A549 (cell line): ENCODE measurements at regions of chr18 and their contacts with region 1.

Region 1: GRCh38 chr18:59402432-59403090 is 43.5 kb upstream of the LMAN1 start:
- DNase-seq: peak; percentile 76 to 87
- ATAC-seq: peak; percentile 100
- H3K4me3 ChIP-seq: no peak overlapping the region
- H3K27ac ChIP-seq: no peak overlapping the region
- H3K4me1 ChIP-seq: no peaks in the 10 kb centered on the region
- CTCF ChIP-seq: peak; percentile 85
- EP300 ChIP-seq: no peak
- POLR2A ChIP-seq: no peak
- RAD21 ChIP-seq: peak; percentile 90 to 95

Region 2: GRCh38 chr18:59249205-59249774 is 153.3 kb before region 1 on chr18:
- CTCF ChIA-PET with region 1: interaction called, 87 read pairs
- POLR2A ChIA-PET with region 1: interaction called, 6 read pairs
- DNase-seq: peak; percentile 38 to 69
- ATAC-seq: peak; percentile 70 to 92
- H3K4me3 ChIP-seq: no peak overlapping the region
- H3K27ac ChIP-seq: no peak overlapping the region
- H3K4me1 ChIP-seq: no peaks in the 10 kb centered on the region
- CTCF ChIP-seq: peak; percentile 54
- EP300 ChIP-seq: no peak
- POLR2A ChIP-seq: no peak
- RAD21 ChIP-seq: peak; percentile 68 to 69

Region 3: GRCh38 chr18:59303006-59303405 is 99.6 kb before region 1 on chr18:
- CTCF ChIA-PET with region 1: interaction called, 108 read pairs
- POLR2A ChIA-PET with region 1: no interaction called
- DNase-seq: no peak
- ATAC-seq: no peak
- H3K4me3 ChIP-seq: no peak overlapping the region
- H3K27ac ChIP-seq: no peak overlapping the region
- H3K4me1 ChIP-seq: no peaks in the 10 kb centered on the region
- CTCF ChIP-seq: no peak
- EP300 ChIP-seq: no peak
- POLR2A ChIP-seq: no peak
- RAD21 ChIP-seq: no peak

Region 4: DNA sequence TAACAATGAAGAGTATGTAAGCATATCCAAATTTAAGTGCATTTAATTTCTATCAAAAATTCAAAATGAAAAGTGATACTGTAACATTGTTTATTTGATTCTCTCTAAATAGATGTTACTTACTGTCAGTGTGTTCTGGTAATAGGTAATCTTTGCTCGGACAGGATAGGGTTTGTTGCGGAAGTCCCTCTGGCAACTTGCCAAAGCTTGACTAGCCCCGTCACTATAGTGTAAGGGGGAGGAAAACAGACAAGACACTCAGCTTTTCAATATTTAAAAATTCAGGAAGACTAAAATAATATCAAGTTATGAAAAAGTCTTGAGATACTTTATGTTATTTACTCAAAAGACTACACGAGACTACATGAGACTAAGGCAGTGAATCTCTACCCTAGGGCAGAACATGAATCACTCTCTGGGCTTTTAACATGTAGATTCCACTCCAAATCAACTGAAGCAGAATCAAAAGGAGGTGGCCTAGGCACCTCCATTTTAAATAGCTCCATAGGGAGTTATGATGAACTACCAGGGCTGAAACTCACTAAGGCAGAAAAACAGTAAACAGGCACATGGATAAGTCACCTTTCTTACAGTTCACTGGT is 49.4 kb before region 1 on chr18:
- CTCF ChIA-PET with region 1: interaction called, 12 read pairs
- POLR2A ChIA-PET with region 1: no interaction called
- DNase-seq: no peak
- ATAC-seq: no peak
- H3K4me3 ChIP-seq: no peak overlapping the region
- H3K27ac ChIP-seq: no peak overlapping the region
- H3K4me1 ChIP-seq: peaks cover 17% of the 10 kb centered on the region; the same call in 2 of the 3 replicates
- CTCF ChIP-seq: no peak
- EP300 ChIP-seq: no peak
- POLR2A ChIP-seq: no peak
- RAD21 ChIP-seq: no peak

Region 5: DNA sequence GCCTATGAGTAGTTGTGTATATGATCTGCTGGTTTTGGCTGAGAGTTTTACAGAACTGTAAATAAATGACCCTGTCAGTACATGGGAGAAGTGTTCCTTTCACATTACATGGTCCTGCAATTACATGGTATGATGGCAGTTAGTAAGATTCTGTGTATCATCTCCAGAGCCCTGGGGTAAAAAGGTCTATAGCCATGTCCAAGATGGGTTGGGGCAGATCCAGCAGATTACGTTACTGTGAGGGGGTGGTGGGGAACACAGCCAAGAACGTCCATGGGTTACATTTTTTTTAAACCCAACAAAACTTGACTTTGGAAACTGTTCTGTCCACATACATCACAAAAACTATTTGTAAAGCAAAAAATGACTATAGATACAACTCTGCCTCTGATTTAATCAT is 20.7 kb after region 1 on chr18:
- CTCF ChIA-PET with region 1: no interaction called
- POLR2A ChIA-PET with region 1: no interaction called
- DNase-seq: no peak
- ATAC-seq: no peak
- H3K4me3 ChIP-seq: no peak overlapping the region
- H3K27ac ChIP-seq: no peak overlapping the region
- H3K4me1 ChIP-seq: no peaks in the 10 kb centered on the region
- CTCF ChIP-seq: no peak
- EP300 ChIP-seq: no peak
- POLR2A ChIP-seq: no peak
- RAD21 ChIP-seq: no peak